Gastrocnemius medialis (tissue), 4 donors: ENCODE measurements at regions of chr12 and their contacts with region 1.

Region 1: GRCh38 chr12:110698171-110698902 is 9.4 kb upstream of the HVCN1 start:
- DNase-seq: peak; percentile 64 to 83
- ATAC-seq: peak; percentile 82 to 94
- H3K4me3 ChIP-seq: peak overlapping the region; percentile 16 to 57 (median 29)
- H3K27ac ChIP-seq: peak overlapping the region; percentile 3 to 64 (median 46)
- H3K4me1 ChIP-seq: peaks cover 0 to 15% of the 10 kb centered on the region in 2 donors
- H3K27me3 ChIP-seq: no peaks in the 10 kb centered on the region
- CTCF ChIP-seq: peak; percentile 60 to 78 (median 69)
- POLR2A ChIP-seq: no peak

Region 2: GRCh38 chr12:110513842-110514241 is 184.5 kb before region 1 on chr12:
- in situ Hi-C with region 1: no loop called
- intact Hi-C with region 1: loop called (anchors 5 kb)
- DNase-seq: no peak
- ATAC-seq: no peak
- H3K4me3 ChIP-seq: no peak overlapping the region
- H3K27ac ChIP-seq: no peak overlapping the region
- H3K4me1 ChIP-seq: no peaks in the 10 kb centered on the region
- H3K27me3 ChIP-seq: no peaks in the 10 kb centered on the region
- CTCF ChIP-seq: no peak
- POLR2A ChIP-seq: no peak

Region 3: GRCh38 chr12:110613771-110614684 is 84.3 kb before region 1 on chr12 and contains the start of gene TCTN1:
- in situ Hi-C with region 1: loop called in 2 of 4 experiments (anchors 10 kb)
- intact Hi-C with region 1: no loop called
- DNase-seq: peak; percentile 93 to 95
- ATAC-seq: peak; percentile 94 to 97
- H3K4me3 ChIP-seq: peak within 1 kb of the TSS; percentile 67 to 94 (median 86)
- H3K27ac ChIP-seq: peak within 1 kb of the TSS; percentile 55 to 82 (median 70)
- H3K4me1 ChIP-seq: peaks cover 10 to 12% of the 10 kb centered on the region in 2 donors
- H3K27me3 ChIP-seq: no peaks in the 10 kb centered on the region
- CTCF ChIP-seq: peak in 1 of 5 experiments; percentile 23
- POLR2A ChIP-seq: peak; percentile 55 to 66
- total RNA-seq, gene TCTN1: 4.7 to 30.8 (median 22.7) TPM

Region 4: GRCh38 chr12:110627500-110628195 is 70.7 kb before region 1 on chr12:
- in situ Hi-C with region 1: loop called in 1 of 4 experiments (anchors 10 kb)
- intact Hi-C with region 1: no loop called
- DNase-seq: no peak
- ATAC-seq: no peak
- H3K4me3 ChIP-seq: no peak overlapping the region
- H3K27ac ChIP-seq: no peak overlapping the region
- H3K4me1 ChIP-seq: no peaks in the 10 kb centered on the region
- H3K27me3 ChIP-seq: no peaks in the 10 kb centered on the region
- CTCF ChIP-seq: no peak
- POLR2A ChIP-seq: no peak